IMR-90 (cell line): ENCODE measurements at regions of chr10 and their contacts with region 1.

Region 1: GRCh38 chr10:3776796-3777571 is 8.0 kb downstream of the KLF6 start:
- DNase-seq: peak; percentile 94
- ATAC-seq: peak; percentile 21
- H3K4me3 ChIP-seq: no peak overlapping the region
- H3K27ac ChIP-seq: peak overlapping the region; percentile 90
- H3K4me1 ChIP-seq: peaks cover 32% of the 10 kb centered on the region
- H3K27me3 ChIP-seq: no peaks in the 10 kb centered on the region
- CTCF ChIP-seq: no peak
- POLR2A ChIP-seq: no peak; the same call in none of the 2 replicates
- RAD21 ChIP-seq: no peak

Region 2: GRCh38 chr10:3197348-3198003 is 579.5 kb before region 1 on chr10:
- CTCF ChIA-PET with region 1: interaction called, 3 read pairs
- POLR2A ChIA-PET with region 1: no interaction called
- dilution Hi-C with region 1: no loop called
- in situ Hi-C with region 1: loop called (anchors 10 kb)
- intact Hi-C with region 1: loop called (anchors 1 kb)
- DNase-seq: peak; percentile 84
- ATAC-seq: peak; percentile 91
- H3K4me3 ChIP-seq: peak overlapping the region; percentile 37
- H3K27ac ChIP-seq: peak overlapping the region; percentile 12
- H3K4me1 ChIP-seq: peaks cover 10% of the 10 kb centered on the region
- H3K27me3 ChIP-seq: peaks cover 9% of the 10 kb centered on the region
- CTCF ChIP-seq: peak; percentile 95
- POLR2A ChIP-seq: peak; percentile 66
- RAD21 ChIP-seq: peak; percentile 98

Region 3: GRCh38 chr10:3226960-3227744 is 549.8 kb before region 1 on chr10:
- CTCF ChIA-PET with region 1: no interaction called
- POLR2A ChIA-PET with region 1: no interaction called
- dilution Hi-C with region 1: no loop called
- in situ Hi-C with region 1: loop called (anchors 10 kb)
- intact Hi-C with region 1: no loop called
- DNase-seq: peak; percentile 79
- ATAC-seq: peak; percentile 59
- H3K4me3 ChIP-seq: no peak overlapping the region
- H3K27ac ChIP-seq: peak overlapping the region; percentile 22; the same call in 1 of the 2 replicates
- H3K4me1 ChIP-seq: peaks cover 7% of the 10 kb centered on the region
- H3K27me3 ChIP-seq: no peaks in the 10 kb centered on the region
- CTCF ChIP-seq: no peak
- POLR2A ChIP-seq: no peak
- RAD21 ChIP-seq: no peak

Region 4: DNA sequence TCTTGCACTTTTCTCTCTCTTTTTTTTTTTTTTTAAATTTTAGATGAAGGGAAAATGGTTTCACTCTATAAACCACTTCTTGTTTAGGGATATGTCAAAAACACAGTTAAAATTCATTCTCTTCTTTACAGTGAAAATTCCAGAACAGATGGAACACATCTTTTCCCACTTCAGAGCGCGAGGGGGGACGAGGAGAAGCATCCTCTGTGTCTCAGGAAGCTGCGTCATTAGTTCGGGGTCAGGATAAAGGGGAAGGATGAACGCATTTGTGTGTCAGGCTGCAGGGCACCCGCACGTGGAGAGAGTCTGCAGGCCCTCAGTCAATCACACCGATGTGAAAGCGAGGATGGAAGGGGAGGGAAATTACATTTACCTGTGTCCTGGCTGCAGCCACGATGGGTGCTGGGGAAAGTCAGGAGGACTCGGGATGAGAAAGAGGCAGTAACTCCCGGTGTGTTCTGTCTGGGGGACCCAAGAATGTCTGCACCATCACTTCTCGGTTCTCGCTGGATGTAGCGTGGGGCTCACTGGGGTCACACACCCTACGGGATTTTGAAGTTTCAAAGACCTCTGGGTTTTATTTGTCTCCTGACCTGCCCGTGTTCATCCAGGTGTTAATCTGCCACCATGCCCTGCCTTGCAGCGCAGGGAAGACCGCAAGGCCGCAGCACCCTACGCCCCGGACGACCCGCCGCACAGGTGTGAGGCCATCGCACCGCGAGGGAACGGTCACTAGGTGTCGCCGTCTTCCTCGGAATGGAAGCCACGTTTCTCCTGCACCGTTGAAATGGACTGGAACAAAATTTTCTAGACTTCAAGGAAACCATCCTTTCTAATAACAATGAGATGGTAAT is 537.7 kb before region 1 on chr10:
- CTCF ChIA-PET with region 1: no interaction called
- POLR2A ChIA-PET with region 1: no interaction called
- dilution Hi-C with region 1: no loop called
- in situ Hi-C with region 1: no loop called
- intact Hi-C with region 1: loop called (anchors 1 kb)
- DNase-seq: peak; percentile 68
- ATAC-seq: peak; percentile 94
- H3K4me3 ChIP-seq: no peak overlapping the region
- H3K27ac ChIP-seq: peak overlapping the region; percentile 77; the same call in 1 of the 2 replicates
- H3K4me1 ChIP-seq: peaks cover 9% of the 10 kb centered on the region; the same call in 1 of the 2 replicates
- H3K27me3 ChIP-seq: no peaks in the 10 kb centered on the region
- CTCF ChIP-seq: peak; percentile 91
- POLR2A ChIP-seq: 0 out of 2 replicates have a peak, but pooled peaks have one; percentile 25
- RAD21 ChIP-seq: peak; percentile 99

Region 5: DNA sequence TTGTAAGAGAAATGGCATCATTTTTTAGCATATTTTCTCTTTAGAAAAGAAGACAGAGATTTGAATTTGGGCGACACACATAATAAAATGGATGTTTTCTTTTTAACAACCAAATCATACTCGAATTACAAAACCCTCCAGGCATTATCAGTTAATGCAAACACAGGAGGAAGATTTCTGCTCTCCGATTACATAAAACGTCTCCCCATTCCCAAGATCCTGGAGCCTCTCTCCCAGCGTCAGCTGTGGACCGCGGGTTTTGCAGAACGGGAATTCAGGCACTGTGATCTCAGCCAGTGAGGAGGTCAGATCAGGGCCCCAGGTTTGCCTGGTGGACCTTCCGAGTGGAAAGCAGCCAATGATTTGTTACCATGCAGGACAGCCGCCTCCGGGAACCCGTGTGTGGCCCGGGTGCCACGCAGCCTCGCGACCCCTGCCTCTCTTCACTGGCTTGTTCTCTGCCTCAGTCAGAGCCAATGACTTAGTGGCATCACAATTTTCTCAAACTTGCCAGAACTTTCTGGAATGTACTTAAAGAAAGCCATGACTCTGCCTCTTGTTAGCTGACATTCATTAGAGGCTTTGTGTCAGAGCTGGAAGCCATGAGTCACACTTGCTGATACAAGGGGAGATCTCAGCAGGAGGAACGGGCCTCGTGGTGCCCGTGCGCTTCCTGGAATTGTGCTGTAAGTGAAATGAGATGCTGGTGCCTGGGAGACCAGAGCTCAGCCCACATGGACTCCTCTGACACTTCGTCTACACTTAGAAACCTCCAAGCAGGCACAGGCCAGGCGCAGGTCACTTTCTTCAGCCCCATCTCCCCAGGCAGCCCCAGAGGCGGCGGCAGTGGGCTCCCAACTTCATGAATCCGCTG is 238.1 kb before region 1 on chr10:
- CTCF ChIA-PET with region 1: no interaction called
- POLR2A ChIA-PET with region 1: no interaction called
- dilution Hi-C with region 1: no loop called
- in situ Hi-C with region 1: no loop called
- intact Hi-C with region 1: loop called (anchors 5 kb)
- DNase-seq: peak; percentile 97
- ATAC-seq: peak; percentile 86
- H3K4me3 ChIP-seq: peak overlapping the region; percentile 3; the same call in 1 of the 2 replicates
- H3K27ac ChIP-seq: peak overlapping the region; percentile 80
- H3K4me1 ChIP-seq: peaks cover 22% of the 10 kb centered on the region
- H3K27me3 ChIP-seq: no peaks in the 10 kb centered on the region
- CTCF ChIP-seq: no peak
- POLR2A ChIP-seq: no peak
- RAD21 ChIP-seq: no peak

Region 6: DNA sequence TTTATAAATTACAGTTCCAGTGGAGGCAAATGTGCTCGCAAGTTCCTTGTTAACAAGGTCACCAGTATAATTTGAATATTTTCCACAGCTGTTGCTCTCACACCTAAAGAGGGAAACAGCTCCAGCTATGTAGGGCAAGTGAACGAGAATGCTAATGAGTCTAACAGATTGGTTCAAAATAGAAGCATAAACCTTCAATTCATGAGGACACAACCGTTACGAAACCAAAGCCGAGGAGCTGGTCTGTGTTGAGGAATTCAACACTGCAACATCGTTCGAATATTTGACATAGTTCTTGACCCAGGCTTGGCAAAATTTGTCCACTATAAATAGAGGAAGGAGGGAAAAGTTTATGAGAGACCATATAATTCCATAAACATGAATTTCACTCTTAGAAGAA is 153.2 kb before region 1 on chr10:
- CTCF ChIA-PET with region 1: no interaction called
- POLR2A ChIA-PET with region 1: no interaction called
- dilution Hi-C with region 1: no loop called
- in situ Hi-C with region 1: no loop called
- intact Hi-C with region 1: loop called (anchors 5 kb)
- DNase-seq: peak; percentile 87
- ATAC-seq: peak; percentile 78
- H3K4me3 ChIP-seq: no peak overlapping the region
- H3K27ac ChIP-seq: peak overlapping the region; percentile 15; the same call in 1 of the 2 replicates
- H3K4me1 ChIP-seq: peaks cover 11% of the 10 kb centered on the region
- H3K27me3 ChIP-seq: no peaks in the 10 kb centered on the region
- CTCF ChIP-seq: no peak
- POLR2A ChIP-seq: no peak
- RAD21 ChIP-seq: no peak

Region 7: GRCh38 chr10:3757638-3758490 is 19.1 kb before region 1 on chr10:
- CTCF ChIA-PET with region 1: no interaction called
- POLR2A ChIA-PET with region 1: no interaction called
- dilution Hi-C with region 1: no loop called
- in situ Hi-C with region 1: no loop called
- intact Hi-C with region 1: no loop called
- DNase-seq: no peak
- ATAC-seq: no peak
- H3K4me3 ChIP-seq: no peak overlapping the region
- H3K27ac ChIP-seq: no peak overlapping the region
- H3K4me1 ChIP-seq: peaks cover 10% of the 10 kb centered on the region
- H3K27me3 ChIP-seq: no peaks in the 10 kb centered on the region
- CTCF ChIP-seq: no peak
- POLR2A ChIP-seq: no peak
- RAD21 ChIP-seq: no peak

Region 8: DNA sequence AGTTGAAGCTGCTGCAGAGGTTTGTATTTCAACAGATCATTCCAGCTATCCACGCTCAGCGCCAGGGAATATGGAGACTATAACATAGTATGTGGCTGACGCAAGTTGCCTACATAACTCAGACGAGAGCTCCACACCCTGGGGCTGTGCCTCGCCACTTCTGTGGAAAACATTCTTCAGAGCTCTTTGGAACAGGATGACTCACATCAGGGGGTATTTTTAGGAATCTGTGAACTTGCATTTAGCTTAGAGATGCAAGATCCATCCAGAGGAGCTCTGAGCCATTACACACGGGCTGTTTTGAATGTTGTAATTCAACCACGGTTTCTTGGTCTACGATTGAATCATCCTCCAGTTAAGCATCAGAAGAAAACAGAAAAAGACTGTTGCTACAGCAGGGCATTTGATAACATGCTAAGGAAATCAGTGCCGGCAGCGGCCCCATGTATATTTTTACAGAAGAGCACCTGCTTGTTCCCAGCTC is 567.6 kb after region 1 on chr10:
- CTCF ChIA-PET with region 1: no interaction called
- POLR2A ChIA-PET with region 1: no interaction called
- dilution Hi-C with region 1: no loop called
- in situ Hi-C with region 1: loop called (anchors 10 kb)
- intact Hi-C with region 1: no loop called
- DNase-seq: peak; percentile 100
- ATAC-seq: peak; percentile 99
- H3K4me3 ChIP-seq: no peak overlapping the region
- H3K27ac ChIP-seq: peak overlapping the region; percentile 82
- H3K4me1 ChIP-seq: peaks cover 9% of the 10 kb centered on the region
- H3K27me3 ChIP-seq: no peaks in the 10 kb centered on the region
- CTCF ChIP-seq: peak; percentile 30; the same call in 1 of the 2 replicates
- POLR2A ChIP-seq: peak; percentile 13; the same call in 1 of the 2 replicates
- RAD21 ChIP-seq: peak; percentile 53